ENCODE measurements at regions of chr17 and their contacts with region 1.

Region 1: GRCh38 chr17:76523084-76524037 is 14.1 kb downstream of the CYGB start:
- DNase-seq: peak; percentile 80 to 93
- ATAC-seq: peak; percentile 75
- H3K4me3 ChIP-seq: no peak overlapping the region
- H3K27ac ChIP-seq: no peak overlapping the region
- H3K4me1 ChIP-seq: no peaks in the 10 kb centered on the region
- H3K27me3 ChIP-seq: no peaks in the 10 kb centered on the region

Region 2: GRCh38 chr17:76547184-76547641 is 23.9 kb after region 1 on chr17:
- intact Hi-C with region 1: loop called in 1 of 2 experiments (anchors 1 kb)
- DNase-seq: no peak
- ATAC-seq: peak; percentile 69
- H3K4me3 ChIP-seq: no peak overlapping the region
- H3K27ac ChIP-seq: no peak overlapping the region
- H3K4me1 ChIP-seq: no peaks in the 10 kb centered on the region
- H3K27me3 ChIP-seq: no peaks in the 10 kb centered on the region

Region 3: DNA sequence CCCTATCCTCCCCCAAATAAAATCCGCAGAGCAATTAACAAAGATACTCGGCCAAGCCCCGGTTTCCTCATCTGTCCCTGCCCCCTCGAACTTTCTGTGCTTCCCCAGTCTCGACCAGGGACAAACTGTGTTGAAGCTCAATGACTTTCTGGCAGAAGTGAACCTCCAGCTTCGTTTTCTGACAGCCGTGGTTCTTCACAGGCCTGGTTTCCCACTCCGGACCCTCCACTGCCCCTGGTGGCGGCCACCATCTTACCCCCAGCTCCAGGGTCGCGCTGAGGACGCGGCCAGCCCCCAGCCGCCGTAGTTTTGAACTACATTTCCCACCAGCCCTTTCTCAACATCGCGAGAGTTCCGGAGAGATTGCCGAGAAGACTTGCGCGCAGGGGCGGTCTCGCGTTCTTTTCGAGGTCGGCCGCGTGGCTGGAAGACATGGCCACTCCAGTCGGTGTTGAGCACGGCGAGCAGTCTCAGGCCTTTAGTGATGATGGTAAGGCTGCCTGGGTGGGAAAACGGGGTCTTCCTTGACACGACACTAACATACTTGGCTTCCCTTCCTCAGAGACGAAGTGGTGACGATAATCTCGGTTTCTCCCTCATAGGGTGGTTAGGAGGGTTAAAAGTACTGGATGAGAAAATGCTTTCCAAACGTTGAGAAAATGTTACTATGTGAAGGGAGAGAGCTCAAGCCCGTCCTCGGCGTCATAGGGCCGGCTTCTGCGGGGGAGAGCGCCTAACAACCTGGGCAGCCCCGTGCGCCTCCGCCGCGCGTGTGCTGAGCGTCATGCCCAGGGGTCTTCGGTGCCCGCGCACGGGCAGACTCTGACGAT is 34.2 kb after region 1 on chr17:
- intact Hi-C with region 1: loop called in 1 of 2 experiments (anchors 5 kb)
- DNase-seq: peak; percentile 97
- ATAC-seq: peak; percentile 98
- H3K4me3 ChIP-seq: peak overlapping the region; percentile 69 to 91
- H3K27ac ChIP-seq: peak overlapping the region in 1 of 2 donors; percentile 84
- H3K4me1 ChIP-seq: no peaks in the 10 kb centered on the region
- H3K27me3 ChIP-seq: no peaks in the 10 kb centered on the region

Region 4: DNA sequence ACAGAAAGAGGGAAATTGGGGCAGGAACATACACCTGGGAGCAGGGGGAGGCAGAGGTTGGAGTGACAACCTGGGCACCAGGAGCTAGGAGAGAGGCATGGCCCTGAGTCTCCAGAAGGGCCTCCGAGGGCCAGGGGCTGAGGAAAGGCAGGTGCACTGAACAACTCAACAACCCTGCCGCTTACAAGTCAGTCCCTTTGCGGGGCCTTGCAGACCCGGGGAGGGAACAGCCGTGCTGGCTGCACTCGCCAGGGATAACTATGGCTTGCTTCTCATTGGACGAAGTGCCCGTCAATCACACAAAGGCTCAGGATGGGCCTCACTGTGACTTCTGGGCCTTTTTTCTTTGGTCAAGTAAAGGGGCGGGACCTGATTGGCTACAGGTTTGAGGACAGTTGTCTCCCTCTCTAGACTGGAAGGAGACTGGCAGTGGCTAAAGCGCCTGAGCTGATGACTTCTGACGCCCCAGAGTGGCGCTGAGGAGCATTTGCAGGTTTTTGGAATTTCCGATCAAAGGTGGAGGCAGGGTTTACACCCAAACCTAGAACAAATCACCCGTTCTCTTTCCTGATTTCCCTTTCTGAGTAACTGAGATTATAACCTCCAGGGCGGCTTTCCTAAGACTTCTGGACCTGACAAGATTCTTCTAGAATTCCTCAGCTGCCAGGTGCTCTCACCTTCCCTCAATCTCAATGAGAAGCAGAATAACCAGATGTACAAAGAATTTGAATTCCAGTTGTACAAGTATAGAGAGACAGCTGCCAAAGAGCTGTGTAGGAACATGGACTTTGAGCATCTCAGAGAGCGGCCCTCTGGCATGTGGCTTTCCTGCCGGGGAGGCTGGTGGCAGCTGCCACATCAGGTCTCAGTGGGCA is 89.9 kb after region 1 on chr17:
- intact Hi-C with region 1: no loop called
- DNase-seq: peak in 1 of 2 donors; percentile 61
- ATAC-seq: no peak
- H3K4me3 ChIP-seq: no peak overlapping the region
- H3K27ac ChIP-seq: no peak overlapping the region
- H3K4me1 ChIP-seq: no peaks in the 10 kb centered on the region
- H3K27me3 ChIP-seq: no peaks in the 10 kb centered on the region

Region 5: GRCh38 chr17:76623271-76624146 is 100.1 kb after region 1 on chr17:
- intact Hi-C with region 1: loop called (anchors 2 to 5 kb)
- DNase-seq: peak; percentile 82 to 91
- ATAC-seq: peak; percentile 94
- H3K4me3 ChIP-seq: no peak overlapping the region
- H3K27ac ChIP-seq: no peak overlapping the region
- H3K4me1 ChIP-seq: no peaks in the 10 kb centered on the region
- H3K27me3 ChIP-seq: no peaks in the 10 kb centered on the region

Region 6: DNA sequence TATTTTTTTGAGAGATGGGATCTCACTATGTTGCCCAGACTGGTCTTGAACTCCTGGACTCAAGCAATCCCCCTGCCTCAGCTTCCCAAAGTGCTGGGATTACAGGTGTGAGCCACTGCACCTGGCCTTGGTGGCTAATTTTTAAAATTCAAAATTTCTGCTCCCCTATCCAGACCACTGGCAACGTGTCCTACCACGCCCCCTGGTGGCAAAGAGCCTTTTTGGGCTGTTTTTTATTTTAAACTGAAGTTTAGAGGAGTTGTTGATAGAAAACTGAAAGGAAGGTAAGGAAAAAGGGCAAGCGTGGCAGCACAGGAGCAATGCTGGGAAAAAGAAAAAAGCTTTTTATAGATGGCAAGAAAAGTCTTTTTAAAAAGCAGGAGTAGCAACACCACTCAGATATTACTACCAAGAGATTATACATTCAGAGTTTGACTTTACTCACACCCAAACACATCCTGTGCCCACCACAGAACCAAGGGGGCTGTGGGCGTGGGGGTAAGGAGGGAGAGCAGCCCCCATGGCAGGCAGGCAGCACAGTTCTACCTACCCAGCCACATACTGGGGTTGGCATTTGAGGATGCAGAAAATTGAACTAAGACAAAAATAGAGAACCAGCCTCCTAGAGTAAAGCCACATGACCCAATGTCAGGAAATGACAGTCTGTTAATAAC is 191.6 kb after region 1 on chr17:
- intact Hi-C with region 1: loop called (anchors 10 kb)
- DNase-seq: peak; percentile 82 to 91
- ATAC-seq: peak; percentile 47
- H3K4me3 ChIP-seq: no peak overlapping the region
- H3K27ac ChIP-seq: no peak overlapping the region
- H3K4me1 ChIP-seq: no peaks in the 10 kb centered on the region
- H3K27me3 ChIP-seq: no peaks in the 10 kb centered on the region